ENCODE measurements at regions of chr10 and their contacts with region 1.

Region 1: DNA sequence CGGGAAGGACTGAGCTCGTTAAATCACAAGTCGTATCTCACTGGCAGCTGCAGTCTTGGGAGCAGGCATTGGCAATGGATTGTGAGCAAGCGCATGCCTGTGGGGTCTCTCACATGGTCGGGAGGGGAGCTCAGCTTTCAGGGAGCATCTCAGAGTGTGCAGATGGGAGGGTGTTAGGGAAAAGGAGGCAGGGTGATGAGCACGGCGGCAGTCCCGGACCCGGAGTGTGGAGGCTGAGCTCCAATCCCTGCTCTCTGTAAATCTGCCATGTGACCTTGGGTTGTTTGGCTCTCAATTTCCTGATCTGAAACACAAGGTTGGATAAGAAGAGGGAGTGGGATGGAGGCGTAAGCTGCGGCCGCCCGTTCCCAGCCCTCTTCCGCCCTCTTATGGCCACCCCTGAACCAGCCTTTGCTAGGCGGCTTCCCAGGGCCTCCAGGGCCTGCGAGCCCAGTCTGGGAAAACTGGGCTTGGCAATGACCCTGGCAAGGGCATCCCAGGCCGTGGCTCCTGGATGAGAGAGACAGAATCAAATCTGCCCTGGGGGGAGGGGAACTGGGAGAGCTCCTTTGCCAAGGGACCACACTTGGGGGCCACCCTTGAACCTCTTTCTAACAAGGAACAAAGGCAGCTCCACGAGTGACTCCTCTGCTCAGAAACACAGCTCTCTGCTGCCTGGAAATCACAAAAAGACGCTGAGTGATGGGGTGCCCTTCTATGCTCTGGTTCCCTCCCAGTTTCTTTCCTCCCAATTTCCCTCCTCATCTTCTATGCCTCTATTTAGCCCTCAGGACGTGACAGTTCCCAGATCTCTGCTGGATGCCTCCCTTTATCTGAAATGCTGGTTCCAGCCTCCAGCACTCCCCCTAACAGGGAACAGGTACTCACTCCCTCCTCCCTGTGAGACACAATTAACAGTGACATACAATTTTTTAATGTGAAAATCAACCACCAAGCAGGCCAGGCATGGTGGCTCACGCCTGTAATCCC is 41.7 kb upstream of the LOXL4 start:
- DNase-seq: peak; percentile 89
- H3K4me3 ChIP-seq: peak overlapping the region; percentile 32 to 34
- H3K27ac ChIP-seq: peak overlapping the region in 1 of 2 experiments; percentile 72; a peak in 2 of 4 replicates
- H3K4me1 ChIP-seq: peaks cover 0 to 23% of the 10 kb centered on the region in 2 experiments; a peak in 1 of 4 replicates
- H3K27me3 ChIP-seq: no peaks in the 10 kb centered on the region
- CTCF ChIP-seq: peak; percentile 83
- EP300 ChIP-seq: no peak
- RAD21 ChIP-seq: peak; percentile 97

Region 2: GRCh38 chr10:98134431-98135221 is 175.0 kb before region 1 on chr10 and contains the start of gene R3HCC1L:
- CTCF ChIA-PET with region 1: interaction called, 14 read pairs
- POLR2A ChIA-PET with region 1: interaction called, 6 read pairs
- DNase-seq: peak; percentile 92
- H3K4me3 ChIP-seq: peak within 1 kb of the TSS; percentile 84 to 86
- H3K27ac ChIP-seq: peak within 1 kb of the TSS; percentile 85 to 93
- H3K4me1 ChIP-seq: no peaks in the 10 kb centered on the region; a peak in 2 of 4 replicates
- H3K27me3 ChIP-seq: no peaks in the 10 kb centered on the region; the same call in 1 of the 2 replicates
- CTCF ChIP-seq: no peak
- EP300 ChIP-seq: no peak
- RAD21 ChIP-seq: no peak
- polyA plus RNA-seq, gene R3HCC1L: 6.0 and 7.4 TPM in 2 replicates

Region 3: DNA sequence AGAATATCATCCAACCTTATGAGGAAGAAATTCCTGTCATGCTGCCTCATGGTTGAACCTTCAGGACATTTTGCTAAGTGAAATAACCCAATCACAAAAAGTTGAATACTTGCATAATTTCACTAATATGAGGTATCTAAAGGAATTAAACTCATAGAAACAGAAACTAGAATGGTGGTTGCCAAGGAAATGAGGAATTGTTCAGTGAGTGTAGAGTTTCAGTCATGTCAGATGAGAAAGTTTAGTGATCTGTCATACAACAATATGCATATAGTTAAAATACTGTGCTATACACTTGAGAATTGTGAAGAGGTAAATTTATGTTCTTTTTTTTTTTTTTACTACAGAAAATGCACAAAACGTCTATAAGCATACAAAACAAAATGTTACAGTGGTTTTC is 114.5 kb before region 1 on chr10:
- CTCF ChIA-PET with region 1: no interaction called
- POLR2A ChIA-PET with region 1: no interaction called
- DNase-seq: no peak
- H3K4me3 ChIP-seq: no peak overlapping the region
- H3K27ac ChIP-seq: no peak overlapping the region
- H3K4me1 ChIP-seq: no peaks in the 10 kb centered on the region; a peak in 1 of 4 replicates
- H3K27me3 ChIP-seq: no peaks in the 10 kb centered on the region
- CTCF ChIP-seq: no peak
- EP300 ChIP-seq: no peak
- RAD21 ChIP-seq: no peak

Region 4: DNA sequence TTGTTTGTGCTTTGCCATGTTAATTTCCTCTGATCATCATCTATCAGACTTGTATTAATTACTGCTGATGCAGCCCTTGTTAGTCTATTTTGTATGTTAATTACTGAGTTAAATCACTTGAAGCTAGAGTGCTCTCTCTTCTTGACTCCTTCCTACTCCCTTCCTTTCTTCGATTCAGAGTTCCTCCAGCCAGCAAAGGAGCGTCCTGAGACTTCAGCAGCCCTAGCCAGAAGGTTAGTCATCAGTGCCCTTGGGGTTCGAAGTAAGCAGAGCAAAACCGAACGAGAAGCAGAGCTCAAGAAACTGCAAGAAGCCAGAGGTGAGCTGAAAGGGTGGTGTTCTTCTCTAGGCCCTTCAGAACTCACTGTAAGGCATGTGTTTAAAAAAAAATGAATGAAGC is 73.8 kb before region 1 on chr10:
- CTCF ChIA-PET with region 1: interaction called, 95 read pairs
- POLR2A ChIA-PET with region 1: no interaction called
- DNase-seq: no peak
- H3K4me3 ChIP-seq: no peak overlapping the region
- H3K27ac ChIP-seq: no peak overlapping the region
- H3K4me1 ChIP-seq: 0 out of 4 replicates have a peak, but pooled peaks cover 0 to 6% of the 10 kb centered on the region in 2 experiments
- H3K27me3 ChIP-seq: no peaks in the 10 kb centered on the region
- CTCF ChIP-seq: no peak
- EP300 ChIP-seq: no peak
- RAD21 ChIP-seq: no peak

Region 5: GRCh38 chr10:98253499-98253898 is 56.2 kb before region 1 on chr10:
- CTCF ChIA-PET with region 1: interaction called, 29 read pairs
- POLR2A ChIA-PET with region 1: no interaction called
- DNase-seq: no peak
- H3K4me3 ChIP-seq: no peak overlapping the region
- H3K27ac ChIP-seq: peak overlapping the region in 1 of 2 experiments; percentile 19; a peak in 1 of 4 replicates
- H3K4me1 ChIP-seq: peaks cover 0 to 18% of the 10 kb centered on the region in 2 experiments; a peak in 1 of 4 replicates
- H3K27me3 ChIP-seq: no peaks in the 10 kb centered on the region
- CTCF ChIP-seq: no peak
- EP300 ChIP-seq: no peak
- RAD21 ChIP-seq: no peak

Region 6: DNA sequence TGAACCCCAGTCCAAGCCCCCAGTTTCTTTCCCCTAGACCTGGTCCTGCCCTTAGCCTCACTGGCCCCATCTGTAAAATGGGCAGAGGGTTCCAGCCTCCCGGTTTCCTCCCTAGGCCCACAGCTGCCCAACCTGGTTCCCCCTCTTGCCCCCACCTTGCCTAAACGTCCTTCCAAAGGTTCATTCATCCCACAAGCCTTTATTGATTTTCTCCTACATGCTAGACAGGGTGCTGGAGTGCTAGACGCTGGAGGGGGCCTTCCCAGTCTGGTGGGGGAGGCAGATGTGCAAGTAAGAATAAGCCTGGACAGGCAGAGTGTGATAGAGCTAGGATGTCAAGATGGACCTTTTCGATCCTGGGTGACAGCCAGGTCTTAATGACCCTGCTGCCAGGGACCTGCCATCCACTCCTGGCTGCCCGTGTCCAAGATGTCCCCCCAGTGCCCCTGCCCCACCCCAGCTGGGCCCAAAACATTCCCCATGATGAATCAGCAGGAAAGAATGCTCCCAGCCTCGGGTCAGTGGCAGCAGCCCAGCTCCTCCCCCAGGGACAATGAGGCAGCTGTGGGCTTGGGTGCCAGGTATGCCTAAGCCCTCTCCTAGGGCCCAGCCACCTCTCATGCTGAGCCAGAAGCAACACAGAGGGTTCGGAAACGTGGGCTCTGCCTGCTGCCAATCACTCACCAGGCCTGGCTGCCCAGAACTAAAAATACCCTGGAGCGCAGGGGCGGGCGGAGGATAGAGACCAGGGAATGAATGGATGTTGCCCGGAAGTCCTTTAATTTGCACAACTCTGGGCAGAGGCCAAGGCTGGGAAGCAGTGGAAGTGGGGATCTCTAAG is 40.4 kb before region 1 on chr10:
- CTCF ChIA-PET with region 1: interaction called, 64 read pairs
- POLR2A ChIA-PET with region 1: interaction called, 10 read pairs
- DNase-seq: peak; percentile 56
- H3K4me3 ChIP-seq: no peak overlapping the region
- H3K27ac ChIP-seq: no peak overlapping the region
- H3K4me1 ChIP-seq: peaks cover 11 to 27% of the 10 kb centered on the region in 2 experiments; a peak in 1 of 4 replicates
- H3K27me3 ChIP-seq: no peaks in the 10 kb centered on the region
- CTCF ChIP-seq: no peak
- EP300 ChIP-seq: peak in 1 of 2 experiments; percentile 21; a peak in 1 of 4 replicates
- RAD21 ChIP-seq: no peak

Region 7: GRCh38 chr10:98295907-98296306 is 13.8 kb before region 1 on chr10:
- CTCF ChIA-PET with region 1: interaction called, 43 read pairs
- POLR2A ChIA-PET with region 1: no interaction called
- DNase-seq: peak; percentile 35
- H3K4me3 ChIP-seq: no peak overlapping the region
- H3K27ac ChIP-seq: no peak overlapping the region; a peak in 1 of 4 replicates
- H3K4me1 ChIP-seq: peaks cover 0 to 12% of the 10 kb centered on the region in 2 experiments; a peak in 1 of 4 replicates
- H3K27me3 ChIP-seq: no peaks in the 10 kb centered on the region; the same call in 1 of the 2 replicates
- CTCF ChIP-seq: no peak
- EP300 ChIP-seq: no peak
- RAD21 ChIP-seq: no peak

Region 8: GRCh38 chr10:98340261-98340939 is 30.7 kb after region 1 on chr10:
- CTCF ChIA-PET with region 1: interaction called, 14 read pairs
- POLR2A ChIA-PET with region 1: no interaction called
- DNase-seq: no peak
- H3K4me3 ChIP-seq: no peak overlapping the region
- H3K27ac ChIP-seq: peak overlapping the region in 1 of 2 experiments; percentile 23; a peak in 3 of 4 replicates
- H3K4me1 ChIP-seq: peaks cover 5 to 10% of the 10 kb centered on the region in 2 experiments; a peak in 2 of 4 replicates
- H3K27me3 ChIP-seq: no peaks in the 10 kb centered on the region
- CTCF ChIP-seq: no peak
- EP300 ChIP-seq: no peak
- RAD21 ChIP-seq: no peak